Aorta (tissue), 5 donors: ENCODE measurements at regions of chr11 and their contacts with region 1.

Region 1: GRCh38 chr11:96215110-96215782 is 127.7 kb downstream of the MAML2 start:
- DNase-seq: no peak
- ATAC-seq: peak; percentile 17
- H3K4me3 ChIP-seq: no peak overlapping the region
- H3K27ac ChIP-seq: peak overlapping the region in 1 of 2 donors; percentile 54
- H3K4me1 ChIP-seq: peaks cover 20 to 29% of the 10 kb centered on the region in 2 donors
- H3K27me3 ChIP-seq: no peaks in the 10 kb centered on the region

Region 2: GRCh38 chr11:96162816-96163499 is 52.3 kb before region 1 on chr11:
- intact Hi-C with region 1: loop called (anchors 5 to 10 kb)
- DNase-seq: no peak
- ATAC-seq: peak; percentile 78
- H3K4me3 ChIP-seq: no peak overlapping the region
- H3K27ac ChIP-seq: peak overlapping the region in 1 of 2 donors; percentile 77
- H3K4me1 ChIP-seq: peaks cover 3 to 4% of the 10 kb centered on the region in 2 donors
- H3K27me3 ChIP-seq: no peaks in the 10 kb centered on the region

Region 3: DNA sequence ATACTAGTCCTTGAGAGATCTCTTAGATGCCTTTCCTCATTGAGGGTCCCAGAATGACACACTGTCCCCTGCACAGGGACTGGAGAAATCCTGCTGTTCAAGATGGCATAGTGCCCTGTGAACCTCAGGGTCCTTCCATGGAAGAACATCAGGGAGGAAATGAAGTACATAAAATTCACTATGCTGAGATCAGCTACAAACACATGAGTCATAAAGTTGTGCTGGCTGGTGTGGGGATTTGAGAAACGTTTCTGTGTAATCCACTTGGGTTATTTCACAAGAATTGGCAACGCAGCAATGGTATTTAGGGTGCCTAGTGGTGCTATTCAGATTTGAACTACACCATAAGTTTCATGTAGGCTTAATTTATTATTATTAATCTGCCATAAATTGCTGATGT is 46.6 kb before region 1 on chr11:
- intact Hi-C with region 1: loop called (anchors 5 to 10 kb)
- DNase-seq: no peak
- ATAC-seq: peak; percentile 85
- H3K4me3 ChIP-seq: no peak overlapping the region
- H3K27ac ChIP-seq: peak overlapping the region in 1 of 2 donors; percentile 54
- H3K4me1 ChIP-seq: peaks cover 8 to 9% of the 10 kb centered on the region in 2 donors
- H3K27me3 ChIP-seq: no peaks in the 10 kb centered on the region

Region 4: DNA sequence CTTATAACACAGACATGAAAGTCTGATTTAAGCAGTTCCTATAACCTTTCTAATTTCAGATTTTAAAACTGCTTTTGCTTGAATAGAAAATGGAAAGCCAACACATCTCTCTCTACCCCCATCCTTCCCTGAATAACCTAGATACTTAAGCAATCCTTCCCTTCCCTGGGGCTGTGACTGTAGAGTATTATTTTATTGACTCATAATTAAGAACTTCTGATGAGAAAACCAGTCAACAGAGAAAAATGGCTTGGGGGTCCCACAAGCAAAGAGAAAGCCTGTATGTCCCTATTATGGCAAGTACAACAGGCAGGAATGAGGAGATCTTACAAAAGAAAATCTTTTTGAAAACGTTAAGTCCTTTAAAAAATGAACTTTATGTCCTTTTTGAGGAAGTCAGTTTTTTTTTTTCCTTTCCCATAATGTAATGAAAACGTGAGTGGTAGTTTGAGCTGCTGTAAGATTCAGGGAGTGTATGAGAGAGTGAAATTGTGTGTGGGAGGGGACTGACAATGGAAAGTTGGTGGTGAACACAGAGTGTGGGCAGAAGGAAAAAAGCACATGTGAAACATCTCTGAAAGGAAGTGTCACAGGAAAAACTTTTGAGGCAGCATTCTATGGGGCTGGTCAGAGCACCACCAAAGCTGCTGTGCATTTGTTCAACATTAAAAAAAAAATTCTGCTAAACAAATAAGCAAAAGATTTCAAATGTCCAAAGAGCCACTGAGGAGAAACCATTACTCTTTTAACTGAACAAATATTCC is 26.8 kb before region 1 on chr11:
- intact Hi-C with region 1: no loop called
- DNase-seq: no peak
- ATAC-seq: peak; percentile 29
- H3K4me3 ChIP-seq: no peak overlapping the region
- H3K27ac ChIP-seq: peak overlapping the region; percentile 3 to 25
- H3K4me1 ChIP-seq: peaks cover 0 to 4% of the 10 kb centered on the region in 2 donors
- H3K27me3 ChIP-seq: no peaks in the 10 kb centered on the region

Region 5: GRCh38 chr11:96267496-96268032 is 52.3 kb after region 1 on chr11:
- intact Hi-C with region 1: loop called in 1 of 2 experiments (anchors 5 kb)
- DNase-seq: no peak
- ATAC-seq: no peak
- H3K4me3 ChIP-seq: no peak overlapping the region
- H3K27ac ChIP-seq: no peak overlapping the region
- H3K4me1 ChIP-seq: peaks cover 4 to 10% of the 10 kb centered on the region in 2 donors
- H3K27me3 ChIP-seq: no peaks in the 10 kb centered on the region

Region 6: DNA sequence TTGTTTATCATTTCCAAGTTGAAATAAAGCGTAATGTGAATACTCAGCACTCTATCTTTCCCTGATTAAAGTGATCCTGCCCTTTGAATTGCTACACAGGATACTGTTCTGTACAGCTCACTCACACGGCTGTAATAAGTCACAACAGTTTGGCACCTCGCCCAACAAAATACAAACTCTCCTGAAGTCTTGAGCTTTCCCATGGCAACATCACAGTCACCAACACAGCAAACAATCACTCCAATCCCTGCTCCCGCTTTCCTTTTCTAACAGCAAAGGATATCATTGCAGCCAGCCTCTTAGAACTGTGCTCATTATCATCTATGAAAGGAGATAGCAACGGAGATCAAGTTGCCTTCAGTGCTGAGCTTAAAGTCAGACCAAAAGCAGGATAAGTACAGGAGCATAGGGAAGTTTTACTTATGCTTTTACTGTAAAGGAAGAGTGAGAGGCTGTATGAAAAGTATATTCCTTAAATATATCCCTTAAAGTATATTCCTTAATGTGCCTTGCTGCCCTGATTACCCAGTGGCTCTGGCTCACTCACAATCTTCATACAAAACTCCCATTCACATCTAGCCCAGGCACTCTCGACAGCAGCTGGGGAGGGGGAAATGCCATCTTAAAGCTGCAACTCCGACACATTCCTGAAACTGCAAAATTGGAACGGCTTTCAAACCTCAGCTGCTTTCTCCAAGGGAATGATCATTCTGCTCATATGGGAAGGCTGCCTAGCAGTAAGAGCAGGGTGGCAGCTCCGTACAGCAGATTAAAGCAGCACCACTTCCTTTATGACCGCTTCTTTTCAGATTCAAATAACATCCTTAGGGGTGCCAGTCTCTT is 91.9 kb after region 1 on chr11:
- intact Hi-C with region 1: no loop called
- DNase-seq: peak; percentile 80 to 88
- ATAC-seq: peak; percentile 93
- H3K4me3 ChIP-seq: peak overlapping the region; percentile 44 to 47
- H3K27ac ChIP-seq: peak overlapping the region; percentile 87
- H3K4me1 ChIP-seq: peaks cover 8 to 20% of the 10 kb centered on the region in 2 donors
- H3K27me3 ChIP-seq: no peaks in the 10 kb centered on the region